ENCODE measurements at regions of chr11 and their contacts with region 1.

Region 1: DNA sequence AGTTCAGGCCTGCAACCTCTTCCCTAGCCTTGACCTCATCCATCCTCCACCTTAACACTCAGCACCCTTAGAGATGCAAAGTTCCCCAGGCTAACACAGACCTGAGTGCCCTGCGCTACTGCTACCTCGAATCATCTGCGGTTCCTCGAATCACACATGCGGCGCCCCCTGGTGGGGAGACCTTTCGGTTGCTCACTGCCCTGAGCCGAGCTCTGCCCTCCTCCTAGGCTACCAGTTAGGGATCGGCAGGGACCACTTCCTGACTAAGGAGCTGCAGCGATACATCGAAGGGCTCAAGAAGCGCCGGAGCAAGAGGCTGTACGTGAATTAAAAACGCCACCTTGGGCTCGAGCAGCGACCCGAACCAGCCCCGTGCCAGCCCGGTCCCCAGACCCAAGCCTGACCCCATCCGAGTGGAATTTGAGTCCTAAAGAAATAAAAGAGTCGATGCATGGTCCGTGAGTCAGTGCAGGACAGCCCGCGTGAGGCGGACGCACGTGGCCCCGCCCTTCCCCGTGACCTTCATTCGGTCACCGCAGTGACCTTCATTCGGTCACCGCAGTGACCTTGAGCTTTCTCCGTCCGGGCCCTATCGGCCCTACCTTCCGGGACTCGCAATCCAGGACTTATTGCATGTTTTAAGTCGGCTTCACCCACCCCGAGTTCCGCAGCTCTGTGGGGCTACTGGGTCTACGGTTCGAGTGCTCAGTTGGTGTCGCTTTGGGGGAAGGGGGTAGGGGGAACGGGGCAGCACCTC is 830 bp upstream of the ESRRA start:
- DNase-seq: peak; percentile 97
- ATAC-seq: peak; percentile 31
- H3K4me3 Mint-ChIP-seq: peak overlapping the region; percentile 91
- H3K27ac Mint-ChIP-seq: peak overlapping the region; percentile 100
- H3K4me1 Mint-ChIP-seq: peaks cover 16% of the 10 kb centered on the region
- H3K27me3 Mint-ChIP-seq: peaks cover 26% of the 10 kb centered on the region
- CTCF ChIP-seq: peak; percentile 84

Region 2: DNA sequence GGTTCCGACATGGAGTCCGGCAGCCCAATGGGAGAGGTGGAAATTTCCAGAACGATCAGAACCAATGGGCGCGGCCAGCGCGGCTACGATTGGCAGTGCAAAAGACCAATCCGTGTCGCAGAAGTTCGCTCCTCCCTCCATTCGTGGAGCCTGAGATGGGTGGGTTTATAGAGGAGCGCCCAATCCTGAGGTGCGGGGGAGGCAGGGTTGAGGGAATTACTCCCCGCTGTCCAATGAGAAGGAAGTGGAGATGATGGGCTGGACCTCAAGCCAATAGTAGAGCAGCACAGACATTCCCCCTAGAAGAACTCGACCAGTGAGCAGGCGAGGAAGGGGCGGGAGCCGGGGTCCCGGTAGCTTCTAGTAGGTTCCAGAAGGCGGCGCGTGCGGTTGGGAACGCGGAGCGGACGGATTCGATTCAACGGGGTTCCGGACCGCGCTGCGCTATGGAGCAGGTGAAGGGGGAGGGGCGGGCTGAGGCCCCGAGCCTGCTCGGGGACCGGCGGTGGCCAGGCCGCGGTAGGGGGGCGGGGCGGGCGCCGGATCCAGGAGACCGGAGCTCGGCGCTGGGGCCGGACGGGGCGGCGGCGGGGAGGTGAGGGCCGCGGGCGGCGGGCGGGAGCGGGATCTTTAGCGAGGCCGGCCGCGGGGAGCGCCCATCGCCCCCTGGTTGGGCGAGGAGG is 118.5 kb before region 1 on chr11 and contains the start of gene STIP1:
- CTCF ChIA-PET with region 1: interaction called, 10 read pairs
- POLR2A ChIA-PET with region 1: no interaction called
- DNase-seq: peak; percentile 98
- ATAC-seq: peak; percentile 92
- H3K4me3 Mint-ChIP-seq: peak within 1 kb of the TSS; percentile 93
- H3K27ac Mint-ChIP-seq: peak within 1 kb of the TSS; percentile 96
- H3K4me1 Mint-ChIP-seq: peaks cover 37% of the 10 kb centered on the region
- H3K27me3 Mint-ChIP-seq: no peaks in the 10 kb centered on the region
- CTCF ChIP-seq: no peak
- total RNA-seq, gene STIP1: 291 to 296 TPM (median 296 TPM) in 3 replicates

Region 3: DNA sequence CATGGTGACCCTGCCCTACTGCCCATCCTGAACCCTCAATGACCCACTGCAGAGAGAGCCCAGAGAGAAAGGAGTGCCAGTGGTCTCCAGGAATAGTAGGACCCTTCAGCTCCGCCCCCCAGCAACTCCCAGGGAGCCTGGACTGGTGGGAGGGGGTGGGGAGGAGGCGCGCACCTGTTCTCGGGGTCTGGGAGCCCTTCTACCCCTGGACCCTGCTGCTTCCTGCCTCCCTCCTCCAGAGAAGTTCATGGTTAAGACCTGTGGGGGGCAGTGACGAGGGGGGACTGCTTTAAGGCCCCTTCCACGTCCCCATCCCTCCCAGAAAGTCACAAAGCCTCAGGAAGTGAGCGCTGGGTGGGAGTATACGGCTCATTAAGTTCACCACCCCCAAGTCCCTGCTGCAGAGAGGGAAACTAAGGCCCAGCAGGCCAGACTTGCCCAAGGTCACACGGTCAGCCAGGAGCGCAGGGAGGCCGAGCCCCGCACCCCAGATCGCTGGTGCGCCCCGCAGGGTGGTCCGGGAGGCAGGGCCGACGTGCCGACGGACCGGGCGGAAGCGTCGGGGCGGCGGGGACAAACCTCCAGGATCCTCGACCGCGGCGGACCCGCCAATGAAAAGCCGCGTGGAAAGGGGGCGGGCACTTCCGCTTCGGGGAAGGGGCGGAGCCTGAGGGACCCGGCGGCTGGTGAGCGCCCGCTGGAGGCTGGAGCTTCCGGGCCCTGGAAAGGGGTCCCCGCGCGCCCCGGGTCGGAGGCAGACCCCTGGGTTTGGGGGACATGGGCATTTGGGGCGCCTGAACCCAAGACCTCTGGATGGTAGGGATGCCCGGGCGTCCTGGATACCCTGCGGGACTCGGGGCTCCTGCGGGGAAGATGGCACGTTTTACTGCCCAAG is 78.6 kb before region 1 on chr11 and contains the starts of genes NUDT22 and TRPT1:
- CTCF ChIA-PET with region 1: interaction called, 15 read pairs
- POLR2A ChIA-PET with region 1: interaction called, 3 read pairs
- DNase-seq: peak; percentile 89
- ATAC-seq: peak; percentile 54
- H3K4me3 Mint-ChIP-seq: peak within 1 kb of the TSS; percentile 81
- H3K27ac Mint-ChIP-seq: peak within 1 kb of the TSS; percentile 84
- H3K4me1 Mint-ChIP-seq: peaks cover 24% of the 10 kb centered on the region
- H3K27me3 Mint-ChIP-seq: no peaks in the 10 kb centered on the region
- CTCF ChIP-seq: no peak
- total RNA-seq, gene NUDT22: 59.1 to 64.4 TPM (median 60.1 TPM) in 3 replicates
- total RNA-seq, gene TRPT1: 52.3 to 58.8 TPM (median 53.2 TPM) in 3 replicates

Region 4: DNA sequence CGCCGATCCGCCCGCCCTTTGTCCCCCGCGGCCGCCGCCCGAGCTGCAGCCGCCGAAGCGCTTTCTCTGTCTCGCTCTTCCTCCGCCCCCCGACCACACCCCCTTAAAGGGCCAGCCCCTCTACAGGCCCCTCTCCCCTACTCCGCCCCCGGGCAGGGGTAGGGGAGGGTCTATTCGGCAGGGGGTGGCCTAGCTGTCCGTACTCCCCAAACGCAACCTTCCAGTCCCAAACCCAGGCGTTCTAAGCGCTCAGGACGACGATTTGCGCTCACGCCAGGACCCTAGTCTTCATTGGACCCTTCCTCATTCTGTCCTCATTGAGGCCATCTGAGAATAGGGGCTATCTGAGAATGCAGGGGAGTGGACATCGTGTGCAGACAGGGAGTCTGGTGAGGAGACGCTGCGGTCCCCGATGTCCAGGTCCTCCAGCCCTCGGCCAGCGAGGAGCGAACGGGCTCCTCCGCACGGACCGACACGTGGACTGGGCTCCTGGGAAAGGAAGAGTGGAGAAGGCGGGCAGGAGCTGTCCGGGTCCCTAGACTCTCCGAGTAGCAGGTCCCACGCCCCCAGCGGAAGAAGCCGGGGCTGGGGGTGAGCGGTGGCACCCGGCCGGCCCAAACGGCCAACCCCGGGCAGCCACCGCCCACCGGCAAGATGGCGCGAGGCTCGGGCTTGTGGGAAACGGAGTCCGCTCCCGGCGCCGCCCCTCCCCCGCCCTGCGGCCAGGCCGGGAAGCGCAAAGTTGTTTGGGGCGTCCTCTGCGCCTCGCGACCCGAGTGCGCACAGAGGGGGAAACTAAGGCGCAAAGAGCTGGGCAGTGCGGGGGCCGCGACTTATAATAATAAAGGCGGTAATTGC is 57.4 kb before region 1 on chr11 and contains the start of gene PPP1R14B:
- CTCF ChIA-PET with region 1: interaction called, 44 read pairs
- POLR2A ChIA-PET with region 1: interaction called, 3 read pairs
- DNase-seq: peak; percentile 95
- ATAC-seq: peak; percentile 55
- H3K4me3 Mint-ChIP-seq: peak within 1 kb of the TSS; percentile 88
- H3K27ac Mint-ChIP-seq: peak within 1 kb of the TSS; percentile 97
- H3K4me1 Mint-ChIP-seq: peaks cover 50% of the 10 kb centered on the region
- H3K27me3 Mint-ChIP-seq: no peaks in the 10 kb centered on the region
- CTCF ChIP-seq: no peak
- total RNA-seq, gene PPP1R14B: 435 to 471 TPM (median 458 TPM) in 3 replicates

Region 5: DNA sequence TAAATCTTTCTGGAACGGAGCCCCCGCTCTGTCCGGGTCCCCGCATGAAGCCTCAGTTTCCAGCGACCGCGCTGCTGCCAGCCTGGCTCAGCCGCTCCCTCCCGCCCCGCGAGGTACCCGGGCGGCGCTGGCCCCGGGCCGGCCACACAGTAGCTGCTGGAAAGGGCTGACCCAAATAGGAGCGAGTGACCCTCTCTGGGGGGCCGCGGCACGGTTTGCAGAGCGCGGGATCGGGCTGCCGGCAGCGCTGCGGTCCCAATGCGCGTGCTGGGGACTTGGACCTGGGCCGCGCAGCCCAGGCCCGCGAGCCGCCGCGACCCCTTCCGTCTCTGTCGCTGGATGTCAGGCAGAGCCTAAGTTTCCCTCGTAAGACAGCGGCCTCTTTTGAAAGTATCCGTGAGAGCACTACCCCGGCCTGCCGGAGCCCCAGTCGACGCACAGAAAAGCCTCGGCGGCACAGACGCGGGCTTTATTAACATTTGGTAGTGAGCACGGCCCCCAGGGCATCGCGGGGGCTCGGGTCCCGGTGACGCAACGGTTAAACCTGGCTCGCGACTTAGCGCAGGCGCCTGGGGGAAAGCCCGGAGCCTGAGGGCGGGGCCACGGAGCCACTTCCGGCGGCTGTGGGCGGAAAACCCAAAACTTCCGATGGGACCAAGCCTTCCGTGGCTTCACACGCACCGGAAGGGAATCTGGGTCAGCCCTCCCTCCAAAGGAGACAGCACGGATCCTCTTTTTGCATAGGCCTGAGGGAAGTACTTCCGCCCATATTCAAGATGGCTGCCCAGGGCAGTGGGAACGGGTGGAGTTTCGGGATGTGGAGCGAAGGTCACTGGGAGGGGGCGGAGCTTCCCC is 34.9 kb before region 1 on chr11:
- CTCF ChIA-PET with region 1: interaction called, 69 read pairs
- POLR2A ChIA-PET with region 1: interaction called, 15 read pairs
- DNase-seq: peak; percentile 98
- ATAC-seq: peak; percentile 83
- H3K4me3 Mint-ChIP-seq: peak overlapping the region; percentile 99
- H3K27ac Mint-ChIP-seq: peak overlapping the region; percentile 100
- H3K4me1 Mint-ChIP-seq: peaks cover 21% of the 10 kb centered on the region
- H3K27me3 Mint-ChIP-seq: no peaks in the 10 kb centered on the region
- CTCF ChIP-seq: no peak

Region 6: GRCh38 chr11:64284048-64284961 is 20.2 kb before region 1 on chr11 and contains the start of gene BAD:
- CTCF ChIA-PET with region 1: interaction called, 151 read pairs
- POLR2A ChIA-PET with region 1: interaction called, 3 read pairs
- DNase-seq: peak; percentile 97
- ATAC-seq: peak; percentile 95
- H3K4me3 Mint-ChIP-seq: peak within 1 kb of the TSS; percentile 80
- H3K27ac Mint-ChIP-seq: peak within 1 kb of the TSS; percentile 76; the same call in 1 of the 2 replicates
- H3K4me1 Mint-ChIP-seq: peaks cover 8% of the 10 kb centered on the region
- H3K27me3 Mint-ChIP-seq: peaks cover 8% of the 10 kb centered on the region
- CTCF ChIP-seq: no peak
- total RNA-seq, gene BAD: 30.5 to 34.7 TPM (median 31.3 TPM) in 3 replicates

Region 7: DNA sequence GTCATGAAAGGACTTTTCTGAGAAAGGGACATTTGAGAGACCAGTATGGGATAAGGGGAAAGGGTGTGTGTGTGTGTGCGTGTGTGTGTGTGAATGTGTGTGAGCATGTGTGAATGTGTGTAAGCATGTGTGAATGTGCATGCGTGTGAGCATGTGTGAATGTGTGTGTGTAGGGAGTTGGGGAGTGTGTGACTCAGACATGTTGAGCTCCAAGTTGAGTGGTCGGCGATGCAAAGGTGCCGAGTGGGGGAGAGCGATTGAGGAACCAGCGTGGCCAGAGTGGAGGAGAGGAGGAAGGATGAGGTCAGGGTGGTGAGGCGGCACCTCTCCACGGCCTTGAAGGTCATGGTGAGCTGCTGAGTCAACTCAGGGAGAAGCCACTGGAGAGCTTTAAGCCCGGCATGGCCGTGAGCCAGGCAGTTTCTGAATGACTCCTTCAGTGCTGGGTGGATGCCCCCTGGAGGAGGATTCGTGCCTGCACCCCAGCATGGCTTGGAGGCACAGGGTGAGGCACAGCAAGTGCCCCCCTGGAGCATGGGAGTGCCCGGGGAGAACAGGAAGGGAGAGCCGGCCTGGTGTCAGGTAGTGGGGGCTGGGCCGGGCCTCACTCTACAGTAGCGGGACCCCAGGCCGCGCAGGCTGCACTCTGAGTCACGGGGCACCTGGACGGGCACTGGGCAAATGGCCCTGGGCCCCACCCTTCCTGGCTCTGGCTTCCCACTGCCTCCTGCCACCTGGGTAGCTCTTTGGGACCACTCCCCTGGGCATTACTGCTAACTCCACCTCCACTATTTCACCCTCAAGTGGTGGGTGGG is 27.3 kb after region 1 on chr11:
- CTCF ChIA-PET with region 1: interaction called, 23 read pairs
- POLR2A ChIA-PET with region 1: no interaction called
- DNase-seq: peak; percentile 65
- ATAC-seq: peak; percentile 79
- H3K4me3 Mint-ChIP-seq: no peak overlapping the region
- H3K27ac Mint-ChIP-seq: peak overlapping the region; percentile 11
- H3K4me1 Mint-ChIP-seq: peaks cover 10% of the 10 kb centered on the region
- H3K27me3 Mint-ChIP-seq: peaks cover 12% of the 10 kb centered on the region; the same call in 1 of the 2 replicates
- CTCF ChIP-seq: no peak

Measured in WTC11 (cell line).